Heart right ventricle (tissue), 16 donors: ENCODE measurements at regions of chr16 and their contacts with region 1.

Region 1: GRCh38 chr16:25100511-25100910 is 11.0 kb upstream of the LCMT1 start:
- DNase-seq: no peak
- ATAC-seq: no peak
- H3K4me3 ChIP-seq: no peak overlapping the region
- H3K27ac ChIP-seq: no peak overlapping the region
- H3K4me1 ChIP-seq: no peaks in the 10 kb centered on the region
- H3K27me3 ChIP-seq: no peaks in the 10 kb centered on the region
- CTCF ChIP-seq: no peak

Region 2: GRCh38 chr16:24667244-24667764 is 433.2 kb before region 1 on chr16:
- intact Hi-C with region 1: no loop called
- DNase-seq: no peak
- ATAC-seq: no peak
- H3K4me3 ChIP-seq: no peak overlapping the region
- H3K27ac ChIP-seq: no peak overlapping the region
- H3K4me1 ChIP-seq: peaks cover 0 to 27% (median 14%) of the 10 kb centered on the region in 9 donors
- H3K27me3 ChIP-seq: no peaks in the 10 kb centered on the region
- CTCF ChIP-seq: no peak

Region 3: GRCh38 chr16:25066747-25067631 is 33.5 kb before region 1 on chr16:
- intact Hi-C with region 1: loop called in 4 of 10 experiments (anchors 5 kb)
- DNase-seq: peak; percentile 87 to 88
- ATAC-seq: peak; percentile 93 to 99 (median 97)
- H3K4me3 ChIP-seq: peak overlapping the region; percentile 69 to 94 (median 82)
- H3K27ac ChIP-seq: peak overlapping the region; percentile 74 to 97 (median 94)
- H3K4me1 ChIP-seq: peaks cover 0 to 36% (median 27%) of the 10 kb centered on the region in 9 donors
- H3K27me3 ChIP-seq: no peaks in the 10 kb centered on the region
- CTCF ChIP-seq: no peak

Region 4: GRCh38 chr16:25210758-25211157 is 110.2 kb after region 1 on chr16:
- intact Hi-C with region 1: no loop called
- DNase-seq: no peak
- ATAC-seq: no peak
- H3K4me3 ChIP-seq: no peak overlapping the region
- H3K27ac ChIP-seq: no peak overlapping the region
- H3K4me1 ChIP-seq: no peaks in the 10 kb centered on the region
- H3K27me3 ChIP-seq: no peaks in the 10 kb centered on the region
- CTCF ChIP-seq: no peak